ENCODE measurements at regions of chr7 and their contacts with region 1.

Region 1: GRCh38 chr7:64951250-64951848 is 39.5 kb downstream of the ZNF117 start:
- DNase-seq: no peak
- ATAC-seq: peak; percentile 70

Region 2: DNA sequence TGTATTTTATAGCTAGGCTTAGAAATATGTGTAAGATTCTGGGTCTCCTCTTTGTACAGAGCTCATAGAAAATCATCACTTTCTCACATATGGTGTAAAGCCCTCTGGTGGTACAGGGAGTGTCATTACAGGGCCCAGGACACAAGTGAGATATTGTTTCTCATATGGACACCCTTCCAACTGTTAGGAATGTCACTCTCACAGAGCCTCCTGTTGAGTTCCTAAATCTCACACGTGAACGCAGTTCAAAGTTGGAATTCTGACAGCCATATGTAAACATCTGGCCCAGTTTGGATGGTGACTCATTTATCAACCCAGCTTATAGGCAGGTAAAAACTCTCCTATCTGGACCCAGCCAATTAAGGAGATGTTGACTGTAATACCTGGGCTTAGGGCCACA is 320.9 kb before region 1 on chr7:
- intact Hi-C with region 1: no loop called
- DNase-seq: no peak
- ATAC-seq: no peak

Region 3: DNA sequence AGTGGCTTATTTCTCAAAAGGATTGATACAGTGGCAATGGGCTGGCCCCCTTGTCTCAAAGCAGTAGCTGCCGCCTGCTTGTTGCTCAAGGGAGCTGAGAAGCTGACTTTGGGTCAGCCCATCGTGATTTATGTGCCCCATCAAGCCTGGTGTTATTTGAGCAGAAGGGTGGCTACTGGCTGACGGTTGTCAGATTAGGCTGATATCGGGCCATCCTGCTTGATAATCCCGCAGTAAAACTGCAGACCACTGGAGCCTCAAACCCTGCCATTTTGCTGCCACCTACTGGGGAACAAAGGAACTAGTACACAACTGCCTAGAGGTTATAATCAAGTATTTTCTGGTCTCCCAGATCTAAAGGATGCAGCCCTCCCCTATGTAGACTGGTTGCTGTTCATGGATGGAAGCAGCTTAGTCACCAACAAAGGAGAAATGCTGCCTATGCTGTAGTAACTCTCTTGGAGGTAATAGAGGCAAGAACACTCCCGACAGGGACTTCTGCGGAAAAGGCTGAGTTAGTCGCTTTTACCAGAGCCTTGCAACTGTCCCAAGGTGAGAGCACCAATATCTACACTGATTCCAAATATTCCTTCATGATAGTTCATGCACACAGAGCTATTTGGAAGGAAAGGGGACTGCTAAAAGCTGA is 356.4 kb after region 1 on chr7:
- intact Hi-C with region 1: loop called (anchors 5 kb)
- DNase-seq: peak; percentile 69
- ATAC-seq: peak; percentile 86